Ascending aorta (tissue), 2 donors: ENCODE measurements at regions of chr1 and their contacts with region 1.

Region 1: GRCh38 chr1:77533660-77534305 is 148.7 kb downstream of the ZZZ3 start:
- DNase-seq: no peak
- H3K4me3 ChIP-seq: no peak overlapping the region
- H3K27ac ChIP-seq: no peak overlapping the region
- H3K4me1 ChIP-seq: no peaks in the 10 kb centered on the region
- H3K27me3 ChIP-seq: no peaks in the 10 kb centered on the region
- CTCF ChIP-seq: peak; percentile 43 to 83 (median 80)

Region 2: GRCh38 chr1:77143529-77144121 is 390.2 kb before region 1 on chr1:
- intact Hi-C with region 1: loop called (anchors 5 kb)
- DNase-seq: no peak
- H3K4me3 ChIP-seq: no peak overlapping the region
- H3K27ac ChIP-seq: no peak overlapping the region
- H3K4me1 ChIP-seq: no peaks in the 10 kb centered on the region
- H3K27me3 ChIP-seq: no peaks in the 10 kb centered on the region
- CTCF ChIP-seq: peak in 1 of 3 experiments; percentile 22

Region 3: DNA sequence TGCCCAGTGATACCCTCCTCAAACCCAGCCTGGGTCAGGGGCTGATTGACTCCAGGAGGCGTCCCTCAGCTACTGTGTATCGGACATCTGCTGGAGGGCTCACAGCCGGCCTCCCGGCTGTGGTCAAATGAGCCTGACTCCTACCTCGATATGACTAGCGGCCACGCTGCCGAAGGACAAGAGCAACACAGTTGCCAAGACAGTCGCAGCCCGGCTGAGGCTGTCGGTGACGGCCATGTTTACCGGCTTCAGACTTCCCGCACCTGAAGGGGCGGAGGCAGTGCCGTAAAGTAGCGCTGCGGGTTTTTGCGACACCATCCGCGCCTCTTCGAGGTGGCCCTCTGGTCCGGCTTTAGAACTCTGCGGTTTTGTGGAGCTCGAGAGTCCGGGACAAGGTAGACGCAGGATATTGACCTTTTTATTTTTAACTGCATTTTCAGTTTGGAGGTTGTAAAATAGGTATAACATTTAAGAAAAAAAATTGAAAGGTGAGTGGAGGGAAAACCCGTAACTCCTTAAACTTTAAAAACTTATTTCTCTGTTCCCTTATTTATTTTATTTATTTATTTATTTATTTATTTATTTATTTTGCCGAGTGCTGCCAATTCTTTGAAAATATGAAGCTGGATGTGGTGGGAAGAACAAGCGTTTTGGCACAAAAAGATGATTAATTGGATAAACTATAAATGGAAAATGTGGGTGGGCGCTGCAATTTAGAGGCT is 314.5 kb before region 1 on chr1 and contains the start of gene PIGK:
- intact Hi-C with region 1: loop called (anchors 10 kb)
- DNase-seq: peak; percentile 29 to 90
- H3K4me3 ChIP-seq: peak within 1 kb of the TSS; percentile 75 to 79
- H3K27ac ChIP-seq: peak within 1 kb of the TSS; percentile 84 to 86
- H3K4me1 ChIP-seq: peaks cover 0 to 11% of the 10 kb centered on the region in 2 donors
- H3K27me3 ChIP-seq: no peaks in the 10 kb centered on the region
- CTCF ChIP-seq: no peak
- total RNA-seq, gene PIGK: 3.4 TPM

Region 4: DNA sequence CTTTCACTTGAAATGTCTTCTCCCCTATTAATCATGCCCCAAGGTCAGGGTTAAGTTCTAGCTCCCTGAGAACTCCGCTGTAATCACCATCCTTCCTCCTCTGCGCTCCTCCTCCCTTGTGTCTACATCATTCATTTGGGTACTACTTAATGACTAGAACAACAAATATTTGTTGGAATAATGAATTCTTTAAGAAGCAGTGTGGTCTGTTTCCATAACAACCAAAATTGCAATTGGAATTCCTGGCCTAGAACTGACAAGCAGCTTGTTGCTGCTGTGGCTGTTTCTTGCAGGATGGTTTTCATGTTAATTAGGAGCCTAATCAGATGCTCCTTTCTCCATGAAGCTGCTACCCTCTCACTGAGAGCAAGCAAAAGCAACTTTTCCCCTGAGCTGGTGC is 43.9 kb before region 1 on chr1:
- intact Hi-C with region 1: no loop called
- DNase-seq: no peak
- H3K4me3 ChIP-seq: no peak overlapping the region
- H3K27ac ChIP-seq: no peak overlapping the region
- H3K4me1 ChIP-seq: no peaks in the 10 kb centered on the region
- H3K27me3 ChIP-seq: no peaks in the 10 kb centered on the region
- CTCF ChIP-seq: no peak

Region 5: GRCh38 chr1:77557053-77557452 is 23.3 kb after region 1 on chr1:
- intact Hi-C with region 1: no loop called
- DNase-seq: no peak
- H3K4me3 ChIP-seq: no peak overlapping the region
- H3K27ac ChIP-seq: no peak overlapping the region
- H3K4me1 ChIP-seq: no peaks in the 10 kb centered on the region
- H3K27me3 ChIP-seq: no peaks in the 10 kb centered on the region
- CTCF ChIP-seq: no peak

Region 6: DNA sequence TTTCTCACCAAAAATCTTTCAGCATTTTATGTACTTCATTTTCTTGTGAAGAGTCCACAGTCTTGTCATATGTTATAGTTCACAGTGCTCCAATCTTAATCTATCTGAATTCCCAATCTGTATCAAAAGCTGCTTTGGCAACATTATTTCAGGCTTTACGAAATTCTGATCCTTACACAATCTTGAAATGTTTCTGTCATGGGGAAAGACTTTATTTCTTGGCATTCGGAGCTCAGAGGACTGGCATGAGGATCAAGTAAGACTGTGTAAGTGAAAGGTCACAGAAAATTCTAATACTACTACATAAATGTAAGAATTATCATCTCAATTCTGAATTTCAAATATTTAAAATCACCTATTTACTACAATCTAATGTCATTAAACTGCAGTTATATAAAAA is 223.8 kb after region 1 on chr1:
- intact Hi-C with region 1: no loop called
- DNase-seq: no peak
- H3K4me3 ChIP-seq: peak overlapping the region; percentile 90 to 96
- H3K27ac ChIP-seq: peak overlapping the region in 1 of 2 donors; percentile 89
- H3K4me1 ChIP-seq: peaks cover 0 to 4% of the 10 kb centered on the region in 2 donors
- H3K27me3 ChIP-seq: no peaks in the 10 kb centered on the region
- CTCF ChIP-seq: no peak

Region 7: GRCh38 chr1:77768006-77768405 is 234.2 kb after region 1 on chr1:
- intact Hi-C with region 1: no loop called
- DNase-seq: no peak
- H3K4me3 ChIP-seq: no peak overlapping the region
- H3K27ac ChIP-seq: no peak overlapping the region
- H3K4me1 ChIP-seq: no peaks in the 10 kb centered on the region
- H3K27me3 ChIP-seq: no peaks in the 10 kb centered on the region
- CTCF ChIP-seq: no peak